HepG2 (cell line): ENCODE measurements at regions of chr6 and their contacts with region 1.

Region 1: DNA sequence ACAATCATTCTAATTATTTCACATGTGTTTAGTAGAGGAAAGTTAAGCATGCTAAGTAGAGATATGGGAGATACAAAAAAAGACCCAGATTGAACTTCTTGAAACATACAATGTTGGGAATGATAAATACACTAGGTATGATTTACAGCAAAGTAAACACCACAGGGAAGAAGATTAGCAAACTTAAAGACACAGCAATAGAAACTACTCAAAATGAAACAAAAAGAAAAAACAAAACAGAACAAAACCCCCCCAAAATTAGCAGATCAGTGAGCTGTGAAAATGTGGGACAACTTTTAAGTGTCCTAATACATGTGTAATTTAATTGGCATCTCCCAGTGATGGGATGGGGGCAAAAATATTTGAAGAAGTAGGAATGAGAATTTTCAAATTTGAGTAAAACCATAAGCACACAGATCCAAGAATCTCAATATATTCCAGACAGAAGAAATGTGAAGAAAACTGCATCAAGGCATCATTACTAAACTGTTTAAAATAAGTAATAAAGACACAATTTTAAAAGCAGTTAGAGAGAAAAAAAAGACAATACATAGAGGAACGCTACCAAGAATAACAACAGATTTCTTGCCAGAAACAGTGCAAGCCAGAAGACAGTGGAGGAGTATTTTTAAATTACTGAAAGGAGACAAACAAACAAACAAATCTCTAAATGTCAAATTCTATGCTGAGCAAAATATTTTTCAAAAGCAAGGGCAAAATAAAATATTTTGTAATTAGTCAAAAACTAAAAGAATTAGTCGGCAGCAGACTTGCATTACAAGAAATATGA is 473.7 kb downstream of the QKI start:
- DNase-seq: no peak
- ATAC-seq: no peak
- H3K4me3 ChIP-seq: no peak overlapping the region
- H3K27ac ChIP-seq: no peak overlapping the region
- H3K4me1 ChIP-seq: no peaks in the 10 kb centered on the region
- H3K27me3 ChIP-seq: no peaks in the 10 kb centered on the region
- CTCF ChIP-seq: no peak
- EP300 ChIP-seq: no peak
- POLR2A ChIP-seq: no peak
- RAD21 ChIP-seq: no peak

Region 2: GRCh38 chr6:163916315-163917081 is 28.3 kb after region 1 on chr6:
- CTCF ChIA-PET with region 1: no interaction called
- POLR2A ChIA-PET with region 1: no interaction called
- in situ Hi-C with region 1: no loop called
- intact Hi-C with region 1: loop called (anchors 1 kb)
- DNase-seq: no peak
- ATAC-seq: no peak
- H3K4me3 ChIP-seq: no peak overlapping the region
- H3K27ac ChIP-seq: no peak overlapping the region
- H3K4me1 ChIP-seq: peaks cover 9% of the 10 kb centered on the region
- H3K27me3 ChIP-seq: peaks cover 0 to 5% of the 10 kb centered on the region in 2 experiments; a peak in 2 of 5 replicates
- CTCF ChIP-seq: no peak
- EP300 ChIP-seq: no peak
- POLR2A ChIP-seq: no peak
- RAD21 ChIP-seq: no peak